HepG2 (cell line): ENCODE measurements at regions of chr17 and their contacts with region 1.

Region 1: GRCh38 chr17:55743103-55743679 is 7.7 kb upstream of the PCTP start:
- DNase-seq: peak; percentile 88
- ATAC-seq: peak; percentile 78
- H3K4me3 ChIP-seq: peak overlapping the region in 2 of 3 experiments; percentile 33 to 34; a peak in 3 of 6 replicates
- H3K27ac ChIP-seq: no peak overlapping the region
- H3K4me1 ChIP-seq: peaks cover 45% of the 10 kb centered on the region
- H3K27me3 ChIP-seq: no peaks in the 10 kb centered on the region
- CTCF ChIP-seq: no peak
- EP300 ChIP-seq: peak in 1 of 2 experiments; percentile 50; a peak in 2 of 4 replicates
- POLR2A ChIP-seq: no peak
- RAD21 ChIP-seq: no peak

Region 2: GRCh38 chr17:55731586-55732250 is 11.5 kb before region 1 on chr17:
- CTCF ChIA-PET with region 1: no interaction called
- POLR2A ChIA-PET with region 1: no interaction called
- in situ Hi-C with region 1: no loop called
- intact Hi-C with region 1: no loop called
- DNase-seq: no peak
- ATAC-seq: peak; percentile 67
- H3K4me3 ChIP-seq: peak overlapping the region in 2 of 3 experiments; percentile 20 to 30; a peak in 2 of 6 replicates
- H3K27ac ChIP-seq: no peak overlapping the region
- H3K4me1 ChIP-seq: peaks cover 6% of the 10 kb centered on the region; the same call in 1 of the 2 replicates
- H3K27me3 ChIP-seq: peaks cover 0 to 17% of the 10 kb centered on the region in 2 experiments; a peak in 1 of 5 replicates
- CTCF ChIP-seq: no peak
- EP300 ChIP-seq: no peak
- POLR2A ChIP-seq: no peak
- RAD21 ChIP-seq: no peak

Region 3: DNA sequence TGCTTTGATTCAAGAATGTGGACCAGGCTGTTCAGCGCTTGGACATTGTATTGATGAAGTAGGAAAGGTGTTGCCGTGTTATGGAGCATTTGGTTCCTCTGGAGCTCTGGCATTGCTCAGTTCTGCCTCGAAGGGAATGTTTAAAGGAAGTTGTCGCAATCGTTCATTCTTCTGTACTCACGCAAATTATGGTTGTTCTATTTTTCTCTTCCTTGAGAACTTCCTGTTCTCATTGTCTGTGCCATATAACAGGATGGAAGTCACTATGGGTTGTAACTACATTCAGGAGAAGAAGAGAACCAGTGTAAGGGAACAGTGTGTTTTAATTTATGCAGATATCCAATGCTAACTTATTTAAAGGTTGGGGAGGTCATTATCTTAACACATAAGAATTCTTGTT is 20.7 kb after region 1 on chr17:
- CTCF ChIA-PET with region 1: no interaction called
- POLR2A ChIA-PET with region 1: no interaction called
- in situ Hi-C with region 1: no loop called
- intact Hi-C with region 1: loop called (anchors 2 kb)
- DNase-seq: no peak
- ATAC-seq: no peak
- H3K4me3 ChIP-seq: no peak overlapping the region
- H3K27ac ChIP-seq: no peak overlapping the region
- H3K4me1 ChIP-seq: peaks cover 63% of the 10 kb centered on the region
- H3K27me3 ChIP-seq: no peaks in the 10 kb centered on the region
- CTCF ChIP-seq: no peak
- EP300 ChIP-seq: no peak
- POLR2A ChIP-seq: no peak
- RAD21 ChIP-seq: no peak

Region 4: DNA sequence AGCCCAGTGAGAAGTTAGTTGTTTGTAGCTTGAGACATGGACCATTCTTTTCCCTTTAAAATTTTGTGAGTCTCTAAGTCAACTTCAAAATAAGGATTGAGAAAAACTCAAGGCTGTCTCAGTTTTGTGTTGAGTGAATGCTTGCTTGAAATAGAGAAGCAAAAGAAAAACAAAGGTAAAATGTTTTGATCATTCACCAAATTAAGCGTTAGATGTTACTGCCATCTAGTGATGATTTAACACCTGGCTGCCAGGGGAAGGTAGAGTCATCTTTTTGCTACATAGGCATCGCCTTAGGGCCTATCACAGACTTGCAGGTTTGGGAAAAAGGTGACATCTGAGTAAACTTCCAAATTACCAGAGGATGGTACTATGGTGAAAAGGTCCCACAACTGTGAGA is 82.0 kb after region 1 on chr17:
- CTCF ChIA-PET with region 1: no interaction called
- POLR2A ChIA-PET with region 1: no interaction called
- in situ Hi-C with region 1: no loop called
- intact Hi-C with region 1: loop called (anchors 2 kb)
- DNase-seq: peak; percentile 10
- ATAC-seq: peak; percentile 60; the same call in 2 of the 3 replicates
- H3K4me3 ChIP-seq: no peak overlapping the region
- H3K27ac ChIP-seq: no peak overlapping the region
- H3K4me1 ChIP-seq: no peaks in the 10 kb centered on the region
- H3K27me3 ChIP-seq: no peaks in the 10 kb centered on the region; a peak in 1 of 5 replicates
- CTCF ChIP-seq: peak; percentile 72
- EP300 ChIP-seq: no peak
- POLR2A ChIP-seq: no peak
- RAD21 ChIP-seq: peak; percentile 28; the same call in 1 of the 2 replicates

Region 5: GRCh38 chr17:55926276-55926990 is 183.2 kb after region 1 on chr17:
- CTCF ChIA-PET with region 1: no interaction called
- POLR2A ChIA-PET with region 1: no interaction called
- in situ Hi-C with region 1: no loop called
- intact Hi-C with region 1: no loop called
- DNase-seq: no peak
- ATAC-seq: no peak
- H3K4me3 ChIP-seq: no peak overlapping the region
- H3K27ac ChIP-seq: no peak overlapping the region
- H3K4me1 ChIP-seq: no peaks in the 10 kb centered on the region
- H3K27me3 ChIP-seq: no peaks in the 10 kb centered on the region
- CTCF ChIP-seq: no peak
- EP300 ChIP-seq: no peak
- POLR2A ChIP-seq: no peak
- RAD21 ChIP-seq: no peak